Head of caudate nucleus (tissue), 42 donors: ENCODE measurements at regions of chr2 and their contacts with region 1.

Region 1: DNA sequence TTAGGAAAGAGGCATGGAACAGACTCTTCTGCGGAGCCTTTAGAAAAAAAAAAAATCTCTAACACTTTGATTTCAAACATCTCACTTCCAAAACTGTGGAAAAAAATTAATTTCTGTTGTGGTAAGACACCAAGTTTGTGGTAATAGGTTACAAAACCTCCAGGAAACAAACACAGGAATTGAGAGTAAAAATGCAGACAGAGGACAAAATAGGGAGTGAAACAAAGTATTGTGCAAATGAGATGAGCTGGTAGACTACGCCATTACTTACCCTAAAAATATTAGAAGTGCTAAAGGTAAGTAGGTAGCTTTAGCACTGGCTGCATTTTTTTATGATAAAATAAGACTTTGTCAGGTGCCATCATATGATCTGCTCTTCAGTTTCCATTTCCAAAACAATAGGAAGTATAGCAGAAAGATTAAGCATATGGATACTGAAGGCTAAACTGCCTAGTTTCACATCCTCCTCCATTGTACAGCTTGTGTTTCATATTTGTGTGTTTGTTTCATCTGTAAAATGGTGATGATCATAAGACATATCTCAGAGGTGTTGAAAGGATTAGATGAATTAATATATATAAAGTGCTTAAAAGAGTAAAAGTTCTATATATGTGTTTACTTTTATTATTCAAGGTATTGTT is 309.2 kb downstream of the NR4A2 start:
- DNase-seq: no peak

Region 2: DNA sequence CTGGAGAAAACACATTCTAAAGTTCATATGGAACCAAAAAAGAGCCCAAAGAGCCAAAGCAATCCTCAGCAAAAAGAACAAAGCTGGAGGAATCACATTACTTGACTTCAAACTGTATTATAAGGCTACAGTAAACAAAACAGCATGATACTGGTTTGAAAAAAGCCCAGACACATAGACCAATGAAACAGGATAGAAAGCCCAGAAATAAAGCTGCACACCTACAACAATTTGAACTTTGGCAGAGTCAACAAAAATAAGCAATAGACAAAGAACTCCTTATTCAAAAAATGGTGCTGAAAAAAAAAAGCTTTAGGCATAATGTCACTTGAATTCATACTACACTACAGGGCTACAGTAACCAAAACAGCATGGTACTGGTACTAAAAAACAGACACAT is 19.5 kb after region 1 on chr2:
- intact Hi-C with region 1: loop called (anchors 2 kb)
- DNase-seq: no peak